BJ (cell line): ENCODE measurements at regions of chr9 and their contacts with region 1.

Region 1: GRCh38 chr9:13033959-13034693 is 245.4 kb downstream of the MPDZ start:
- DNase-seq: no peak
- H3K4me3 ChIP-seq: no peak overlapping the region
- H3K27me3 ChIP-seq: no peaks in the 10 kb centered on the region
- CTCF ChIP-seq: peak; percentile 81

Region 2: DNA sequence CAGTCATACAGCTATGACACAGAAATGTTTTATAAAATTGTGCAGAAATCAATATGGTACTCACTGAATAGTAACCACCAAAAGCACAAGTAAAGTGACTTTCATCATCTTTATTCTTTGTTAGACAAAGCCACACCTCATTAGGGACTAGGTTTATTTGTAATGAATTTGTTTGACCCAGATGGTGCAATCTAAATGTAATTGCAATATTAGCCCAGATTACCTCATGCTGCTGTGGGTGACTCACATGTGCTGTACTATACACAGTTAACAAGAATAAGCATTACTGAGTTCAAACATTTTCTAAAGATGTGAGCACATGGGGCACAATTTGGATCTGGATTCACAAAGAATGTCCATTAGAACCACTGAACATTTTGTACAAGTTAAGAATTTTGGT is 1100.2 kb before region 1 on chr9:
- CTCF ChIA-PET with region 1: no interaction called
- POLR2A ChIA-PET with region 1: no interaction called
- DNase-seq: no peak
- H3K4me3 ChIP-seq: no peak overlapping the region
- H3K27me3 ChIP-seq: no peaks in the 10 kb centered on the region
- CTCF ChIP-seq: no peak

Region 3: GRCh38 chr9:12988253-12988652 is 45.9 kb before region 1 on chr9:
- CTCF ChIA-PET with region 1: no interaction called
- POLR2A ChIA-PET with region 1: no interaction called
- DNase-seq: no peak
- H3K4me3 ChIP-seq: no peak overlapping the region
- H3K27me3 ChIP-seq: no peaks in the 10 kb centered on the region
- CTCF ChIP-seq: no peak

Region 4: DNA sequence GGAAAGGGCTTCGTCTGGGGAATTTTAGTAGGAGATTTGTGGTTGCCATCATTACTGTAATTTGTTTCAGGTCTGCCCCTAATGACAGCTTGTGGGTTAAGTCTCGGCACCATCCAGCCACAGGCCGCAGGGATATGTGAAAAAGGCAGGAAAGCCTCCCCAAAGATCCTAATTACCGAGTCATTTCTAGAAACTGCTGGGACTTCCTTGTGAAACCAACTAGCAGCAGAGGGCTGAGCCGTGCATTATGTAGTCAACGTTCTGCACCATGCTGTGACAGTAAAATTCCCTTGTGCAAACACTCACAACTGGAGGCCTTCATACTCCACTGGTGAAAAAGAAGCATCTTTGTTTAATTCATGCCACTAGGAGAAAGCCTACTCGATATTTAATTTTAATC is 15.1 kb after region 1 on chr9:
- CTCF ChIA-PET with region 1: interaction called, 11 read pairs
- POLR2A ChIA-PET with region 1: no interaction called
- DNase-seq: no peak
- H3K4me3 ChIP-seq: no peak overlapping the region
- H3K27me3 ChIP-seq: no peaks in the 10 kb centered on the region
- CTCF ChIP-seq: no peak